Body of pancreas (tissue), 4 donors: ENCODE measurements at regions of chr5 and their contacts with region 1.

Region 1: DNA sequence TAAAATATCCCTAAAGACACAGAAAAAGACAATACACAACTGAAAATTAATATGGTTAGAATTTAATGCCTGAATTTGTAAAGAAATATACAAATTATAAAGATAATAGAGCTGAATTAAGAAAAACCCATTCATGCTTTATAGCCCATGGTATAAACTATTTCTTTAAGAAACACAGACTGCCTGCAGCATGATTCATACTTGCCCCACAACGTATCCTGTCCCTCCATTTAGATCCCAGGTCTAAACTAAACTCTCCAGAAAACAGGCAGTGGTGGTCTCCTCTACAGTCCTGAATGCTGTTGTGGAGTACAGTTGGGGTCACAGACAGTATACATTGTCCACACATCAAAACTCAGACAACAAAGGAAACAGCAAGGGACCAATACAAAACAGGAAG is 24.8 kb downstream of the IL6ST start:
- DNase-seq: no peak
- ATAC-seq: no peak
- H3K4me3 ChIP-seq: no peak overlapping the region
- H3K27ac ChIP-seq: no peak overlapping the region
- H3K4me1 ChIP-seq: peaks cover 6% of the 10 kb centered on the region
- H3K27me3 ChIP-seq: no peaks in the 10 kb centered on the region
- CTCF ChIP-seq: no peak
- POLR2A ChIP-seq: no peak

Region 2: GRCh38 chr5:55601204-55601618 is 368.7 kb before region 1 on chr5:
- intact Hi-C with region 1: no loop called
- DNase-seq: peak; percentile 65 to 85 (median 78)
- ATAC-seq: peak; percentile 81
- H3K4me3 ChIP-seq: no peak overlapping the region
- H3K27ac ChIP-seq: peak overlapping the region; percentile 55 to 89 (median 76)
- H3K4me1 ChIP-seq: peaks cover 46% of the 10 kb centered on the region
- H3K27me3 ChIP-seq: no peaks in the 10 kb centered on the region
- CTCF ChIP-seq: no peak
- POLR2A ChIP-seq: peak in 2 of 3 donors; percentile 29 to 49

Region 3: DNA sequence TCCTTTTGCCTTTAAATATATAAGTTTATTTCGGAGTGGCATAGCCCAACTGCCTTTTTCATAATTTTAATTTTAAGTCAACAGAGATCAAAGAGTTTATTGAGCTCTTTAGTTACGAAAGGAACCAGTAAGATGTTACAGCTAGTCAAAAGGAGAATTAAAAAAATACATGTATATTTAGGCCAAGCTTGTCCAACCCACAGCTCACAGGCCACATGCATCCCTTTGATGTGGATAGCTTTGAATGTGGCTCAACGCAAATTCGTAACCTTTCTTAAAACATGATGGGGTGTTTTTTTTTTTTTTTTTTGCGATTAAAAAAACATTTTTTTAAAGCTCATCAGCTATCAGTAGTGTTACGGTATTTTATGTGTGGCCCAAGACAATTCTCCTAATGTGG is 169.0 kb before region 1 on chr5:
- intact Hi-C with region 1: no loop called
- DNase-seq: no peak
- ATAC-seq: no peak
- H3K4me3 ChIP-seq: no peak overlapping the region
- H3K27ac ChIP-seq: no peak overlapping the region
- H3K4me1 ChIP-seq: no peaks in the 10 kb centered on the region
- H3K27me3 ChIP-seq: no peaks in the 10 kb centered on the region
- CTCF ChIP-seq: no peak
- POLR2A ChIP-seq: no peak

Region 4: GRCh38 chr5:56070851-56071465 is 101.0 kb after region 1 on chr5:
- intact Hi-C with region 1: no loop called
- DNase-seq: no peak
- ATAC-seq: no peak
- H3K4me3 ChIP-seq: no peak overlapping the region
- H3K27ac ChIP-seq: no peak overlapping the region
- H3K4me1 ChIP-seq: peaks cover 12% of the 10 kb centered on the region
- H3K27me3 ChIP-seq: no peaks in the 10 kb centered on the region
- CTCF ChIP-seq: no peak
- POLR2A ChIP-seq: no peak

Region 5: DNA sequence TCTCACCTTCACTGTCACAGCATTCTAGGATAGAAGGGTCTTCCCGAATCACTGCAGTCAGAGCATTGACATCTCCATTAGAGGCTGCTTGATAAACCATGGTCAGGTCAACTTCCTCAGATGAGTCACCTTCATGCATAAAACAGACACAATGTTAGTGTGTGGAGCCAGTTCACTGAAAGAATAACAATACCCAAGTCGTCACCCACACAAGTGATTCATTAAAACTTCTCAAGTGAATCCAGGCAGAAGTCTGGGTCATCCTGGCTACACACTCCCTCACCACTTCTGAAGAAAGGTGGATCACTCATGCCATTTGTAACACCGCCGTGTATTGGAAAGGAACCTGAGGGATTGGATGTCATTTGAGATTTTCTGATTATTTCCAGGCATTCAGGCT is 213.6 kb after region 1 on chr5:
- intact Hi-C with region 1: loop called (anchors 10 kb)
- DNase-seq: no peak
- ATAC-seq: no peak
- H3K4me3 ChIP-seq: no peak overlapping the region
- H3K27ac ChIP-seq: no peak overlapping the region
- H3K4me1 ChIP-seq: no peaks in the 10 kb centered on the region
- H3K27me3 ChIP-seq: no peaks in the 10 kb centered on the region
- CTCF ChIP-seq: no peak
- POLR2A ChIP-seq: no peak

Region 6: DNA sequence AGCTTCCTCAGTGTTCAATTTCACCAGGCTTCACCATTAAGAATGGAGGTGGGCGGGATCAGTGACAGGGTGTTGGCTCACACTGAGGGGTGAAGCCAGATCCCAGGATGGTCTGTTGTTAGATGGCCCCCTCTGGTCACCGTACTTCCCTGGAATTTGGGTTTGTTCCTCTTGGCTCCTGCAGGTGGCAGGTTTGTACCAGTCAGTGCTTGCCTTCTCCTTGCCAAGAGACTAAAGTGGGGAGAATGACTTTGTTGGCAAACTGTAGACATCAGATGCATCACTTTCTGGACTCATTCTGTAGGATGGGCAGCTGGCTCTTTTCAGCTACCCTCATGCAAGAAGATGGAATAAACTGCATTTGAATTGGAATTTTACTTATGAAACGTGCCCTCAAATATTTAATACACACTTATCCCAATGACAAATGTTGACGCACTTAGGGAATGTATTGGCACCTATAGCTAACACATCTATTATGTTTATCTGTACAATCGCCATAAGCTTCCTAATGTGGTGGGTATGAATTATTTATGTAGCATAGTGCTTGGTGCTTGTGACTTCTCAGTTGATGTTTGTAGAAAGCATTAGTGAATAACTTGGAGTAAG is 294.6 kb after region 1 on chr5:
- intact Hi-C with region 1: no loop called
- DNase-seq: peak; percentile 36 to 52 (median 50)
- ATAC-seq: peak; percentile 55
- H3K4me3 ChIP-seq: no peak overlapping the region
- H3K27ac ChIP-seq: no peak overlapping the region
- H3K4me1 ChIP-seq: no peaks in the 10 kb centered on the region
- H3K27me3 ChIP-seq: no peaks in the 10 kb centered on the region
- CTCF ChIP-seq: peak; percentile 39 to 76 (median 64)
- POLR2A ChIP-seq: no peak